ENCODE measurements at regions of chr4 and their contacts with region 1.

Region 1: GRCh38 chr4:101205916-101206315 is 141.4 kb downstream of the PPP3CA start:
- DNase-seq: no peak
- ATAC-seq: peak; percentile 77
- H3K4me3 Mint-ChIP-seq: no peak overlapping the region
- H3K27ac Mint-ChIP-seq: peak overlapping the region; percentile 51
- H3K4me1 Mint-ChIP-seq: peaks cover 58% of the 10 kb centered on the region
- H3K27me3 Mint-ChIP-seq: no peaks in the 10 kb centered on the region
- CTCF ChIP-seq: no peak

Region 2: GRCh38 chr4:101191302-101192098 is 14.4 kb before region 1 on chr4:
- CTCF ChIA-PET with region 1: interaction called, 3 read pairs
- POLR2A ChIA-PET with region 1: no interaction called
- intact Hi-C with region 1: loop called (anchors 2 kb)
- DNase-seq: no peak
- ATAC-seq: no peak
- H3K4me3 Mint-ChIP-seq: no peak overlapping the region
- H3K27ac Mint-ChIP-seq: peak overlapping the region; percentile 50
- H3K4me1 Mint-ChIP-seq: peaks cover 47% of the 10 kb centered on the region
- H3K27me3 Mint-ChIP-seq: no peaks in the 10 kb centered on the region
- CTCF ChIP-seq: no peak

Region 3: GRCh38 chr4:101221294-101221693 is 15.4 kb after region 1 on chr4:
- CTCF ChIA-PET with region 1: no interaction called
- POLR2A ChIA-PET with region 1: no interaction called
- intact Hi-C with region 1: loop called (anchors 2 kb)
- DNase-seq: no peak
- ATAC-seq: no peak
- H3K4me3 Mint-ChIP-seq: no peak overlapping the region
- H3K27ac Mint-ChIP-seq: no peak overlapping the region
- H3K4me1 Mint-ChIP-seq: peaks cover 72% of the 10 kb centered on the region
- H3K27me3 Mint-ChIP-seq: no peaks in the 10 kb centered on the region
- CTCF ChIP-seq: no peak

Measured in activated B cell treated with CpG ODN at 0.5 μM for 24 hours (primary cell).